ENCODE measurements at regions of chr4 and their contacts with region 1.

Region 1: DNA sequence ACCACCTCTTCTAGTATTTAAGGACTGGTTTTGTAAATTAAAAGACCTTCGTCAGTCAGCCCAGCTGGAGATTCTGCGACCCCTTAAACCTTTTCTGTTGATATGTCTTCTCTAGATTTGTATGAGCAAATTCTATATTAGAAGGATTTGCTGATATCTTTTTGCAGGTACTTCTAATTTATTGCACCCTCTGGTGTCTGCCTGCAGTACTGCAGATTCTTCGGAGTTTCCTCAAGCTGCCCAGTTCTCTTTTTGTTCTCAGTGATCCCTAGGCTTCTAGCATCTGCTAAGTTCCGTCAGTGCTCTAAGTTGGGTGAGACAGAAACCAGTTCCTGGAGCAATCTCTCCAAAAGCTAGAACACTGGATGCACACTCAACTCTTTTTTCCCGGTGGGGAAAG is 545.2 kb downstream of the C4orf33 start:
- DNase-seq: peak; percentile 10
- CTCF ChIP-seq: peak; percentile 77

Region 2: GRCh38 chr4:129362674-129363274 is 278.4 kb before region 1 on chr4:
- in situ Hi-C with region 1: loop called (anchors 10 kb)
- DNase-seq: peak; percentile 45
- CTCF ChIP-seq: peak; percentile 81